CD8-positive, alpha-beta T cell (primary cell): ENCODE measurements at regions of chr9 and their contacts with region 1.

Region 1: DNA sequence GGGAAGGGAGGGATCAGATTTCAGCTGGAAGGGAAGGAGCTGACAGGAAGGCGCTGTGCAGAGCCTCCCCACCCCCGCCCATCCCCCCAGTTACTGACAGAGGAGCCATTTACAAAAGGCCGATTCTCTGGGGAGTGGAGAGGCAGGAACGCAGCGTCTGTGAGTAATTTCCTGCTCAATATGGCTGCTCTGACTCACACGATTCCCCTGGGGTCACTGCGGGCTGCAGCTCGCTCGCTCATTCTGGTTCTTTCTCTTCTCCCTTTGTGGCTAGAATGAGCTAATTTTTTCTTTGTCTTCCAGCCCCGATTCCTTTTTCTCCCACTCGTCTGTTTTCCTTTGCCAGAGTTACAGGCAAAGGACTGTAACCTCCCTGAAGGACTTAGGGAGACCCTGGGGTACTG is 28.8 kb downstream of the PTPA start:
- DNase-seq: peak; percentile 35 to 92 (median 80)
- ATAC-seq: peak; percentile 89
- H3K4me3 ChIP-seq: peak overlapping the region; percentile 55 to 58
- H3K4me3 Mint-ChIP-seq: peak overlapping the region; percentile 90
- H3K27ac ChIP-seq: peak overlapping the region; percentile 86 to 94
- H3K27ac Mint-ChIP-seq: peak overlapping the region; percentile 95
- H3K4me1 ChIP-seq: peaks cover 36% of the 10 kb centered on the region
- H3K4me1 Mint-ChIP-seq: peaks cover 34% of the 10 kb centered on the region
- H3K27me3 ChIP-seq: no peaks in the 10 kb centered on the region
- H3K27me3 Mint-ChIP-seq: no peaks in the 10 kb centered on the region
- CTCF ChIP-seq: no peak

Region 2: DNA sequence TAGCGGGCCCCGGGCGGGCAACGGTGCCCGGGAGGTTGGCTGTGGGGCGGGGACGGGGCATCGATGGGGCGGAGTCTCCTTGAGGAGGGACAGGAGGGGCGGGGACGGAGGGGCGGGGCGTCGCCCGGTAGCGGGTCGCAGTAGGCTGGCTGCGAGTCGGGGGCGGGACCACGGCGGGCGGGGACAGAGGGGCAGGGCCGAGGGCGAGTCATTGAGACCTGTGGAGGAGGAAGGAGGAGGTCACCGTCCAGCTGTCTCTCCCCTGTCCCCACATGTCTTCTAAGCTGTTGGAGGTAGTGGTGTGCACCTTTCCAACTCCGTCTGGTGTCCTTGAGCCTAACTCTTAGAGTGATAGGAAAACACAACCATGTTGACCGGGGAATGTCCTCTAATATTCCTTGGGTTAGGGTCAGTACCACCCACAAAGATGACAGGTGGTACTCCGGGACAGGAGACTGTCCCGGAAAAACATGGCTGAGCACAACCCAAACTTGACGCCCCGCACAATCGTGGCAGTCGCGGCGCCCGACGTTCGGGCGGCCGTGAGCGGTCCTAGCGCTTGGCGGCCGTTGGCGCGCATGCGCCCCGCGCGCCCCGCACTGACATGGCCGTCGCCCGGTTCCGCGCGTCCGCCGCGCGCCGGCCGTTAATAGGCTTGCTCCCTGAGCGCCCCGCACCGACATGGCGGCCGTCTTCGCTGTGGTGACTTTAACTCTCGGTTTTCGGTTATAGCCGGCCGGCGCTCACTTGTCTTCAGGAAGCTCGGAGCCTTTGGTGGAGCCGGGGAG is 29.1 kb before region 1 on chr9 and contains the starts of genes CRAT and PTPA:
- CTCF ChIA-PET with region 1: interaction called, 5 read pairs
- POLR2A ChIA-PET with region 1: no interaction called
- intact Hi-C with region 1: loop called in 1 of 2 experiments (anchors 2 kb)
- DNase-seq: peak; percentile 91 to 97 (median 96)
- ATAC-seq: peak; percentile 88
- H3K4me3 ChIP-seq: peak within 1 kb of the TSS; percentile 69 to 85
- H3K4me3 Mint-ChIP-seq: peak within 1 kb of the TSS; percentile 93
- H3K27ac ChIP-seq: peak within 1 kb of the TSS; percentile 79 to 81
- H3K27ac Mint-ChIP-seq: peak within 1 kb of the TSS; percentile 91
- H3K4me1 ChIP-seq: peaks cover 21% of the 10 kb centered on the region
- H3K4me1 Mint-ChIP-seq: peaks cover 39% of the 10 kb centered on the region
- H3K27me3 ChIP-seq: no peaks in the 10 kb centered on the region
- H3K27me3 Mint-ChIP-seq: no peaks in the 10 kb centered on the region
- CTCF ChIP-seq: no peak
- total RNA-seq, gene CRAT: 5.6 to 6.3 TPM
- total RNA-seq, gene PTPA: 24.7 to 26.8 TPM

Region 3: GRCh38 chr9:129202613-129203555 is 62.9 kb after region 1 on chr9:
- CTCF ChIA-PET with region 1: interaction called, 3 read pairs
- POLR2A ChIA-PET with region 1: no interaction called
- intact Hi-C with region 1: loop called in 1 of 2 experiments (anchors 2 kb)
- DNase-seq: peak; percentile 84 to 96 (median 90)
- ATAC-seq: peak; percentile 93
- H3K4me3 ChIP-seq: peak overlapping the region; percentile 56 to 95
- H3K4me3 Mint-ChIP-seq: peak overlapping the region; percentile 78
- H3K27ac ChIP-seq: peak overlapping the region; percentile 62 to 65
- H3K27ac Mint-ChIP-seq: peak overlapping the region; percentile 79
- H3K4me1 ChIP-seq: peaks cover 30% of the 10 kb centered on the region
- H3K4me1 Mint-ChIP-seq: peaks cover 28% of the 10 kb centered on the region
- H3K27me3 ChIP-seq: no peaks in the 10 kb centered on the region
- H3K27me3 Mint-ChIP-seq: no peaks in the 10 kb centered on the region
- CTCF ChIP-seq: no peak

Region 4: DNA sequence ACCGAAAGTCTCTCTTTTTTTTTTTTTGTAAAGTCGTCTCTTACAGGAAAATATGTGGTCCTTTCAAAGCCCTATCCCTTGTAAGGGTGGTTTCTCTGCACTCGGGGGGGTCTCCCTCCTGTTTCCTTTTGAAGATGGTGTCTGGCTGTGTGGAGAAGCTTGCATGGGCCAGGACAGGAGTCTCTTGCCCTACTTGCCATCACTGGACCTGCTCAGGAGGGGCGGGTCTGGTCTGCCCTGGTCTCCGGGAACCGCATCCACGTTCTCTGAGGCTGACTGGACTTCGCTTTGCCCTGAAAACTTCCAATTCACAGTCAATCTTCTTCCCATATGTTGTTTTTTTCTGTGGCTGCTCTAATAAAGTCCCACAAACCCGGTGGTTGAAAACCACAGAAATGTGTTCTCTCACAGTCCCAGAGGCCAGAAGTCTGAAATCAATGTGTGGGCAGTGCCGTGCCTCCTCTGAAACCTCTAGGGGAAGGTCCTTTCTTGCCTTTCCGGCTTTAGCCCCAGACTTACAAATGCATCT is 131.0 kb after region 1 on chr9:
- CTCF ChIA-PET with region 1: no interaction called
- POLR2A ChIA-PET with region 1: no interaction called
- intact Hi-C with region 1: loop called in 1 of 2 experiments (anchors 1 kb)
- DNase-seq: peak in 2 of 9 experiments; percentile 23 to 64
- ATAC-seq: peak; percentile 55
- H3K4me3 ChIP-seq: peak overlapping the region; percentile 10 to 16
- H3K4me3 Mint-ChIP-seq: peak overlapping the region; percentile 76
- H3K27ac ChIP-seq: peak overlapping the region in 1 of 2 experiments; percentile 43
- H3K27ac Mint-ChIP-seq: peak overlapping the region; percentile 70
- H3K4me1 ChIP-seq: peaks cover 22% of the 10 kb centered on the region
- H3K4me1 Mint-ChIP-seq: peaks cover 31% of the 10 kb centered on the region
- H3K27me3 ChIP-seq: no peaks in the 10 kb centered on the region
- H3K27me3 Mint-ChIP-seq: no peaks in the 10 kb centered on the region
- CTCF ChIP-seq: no peak

Region 5: DNA sequence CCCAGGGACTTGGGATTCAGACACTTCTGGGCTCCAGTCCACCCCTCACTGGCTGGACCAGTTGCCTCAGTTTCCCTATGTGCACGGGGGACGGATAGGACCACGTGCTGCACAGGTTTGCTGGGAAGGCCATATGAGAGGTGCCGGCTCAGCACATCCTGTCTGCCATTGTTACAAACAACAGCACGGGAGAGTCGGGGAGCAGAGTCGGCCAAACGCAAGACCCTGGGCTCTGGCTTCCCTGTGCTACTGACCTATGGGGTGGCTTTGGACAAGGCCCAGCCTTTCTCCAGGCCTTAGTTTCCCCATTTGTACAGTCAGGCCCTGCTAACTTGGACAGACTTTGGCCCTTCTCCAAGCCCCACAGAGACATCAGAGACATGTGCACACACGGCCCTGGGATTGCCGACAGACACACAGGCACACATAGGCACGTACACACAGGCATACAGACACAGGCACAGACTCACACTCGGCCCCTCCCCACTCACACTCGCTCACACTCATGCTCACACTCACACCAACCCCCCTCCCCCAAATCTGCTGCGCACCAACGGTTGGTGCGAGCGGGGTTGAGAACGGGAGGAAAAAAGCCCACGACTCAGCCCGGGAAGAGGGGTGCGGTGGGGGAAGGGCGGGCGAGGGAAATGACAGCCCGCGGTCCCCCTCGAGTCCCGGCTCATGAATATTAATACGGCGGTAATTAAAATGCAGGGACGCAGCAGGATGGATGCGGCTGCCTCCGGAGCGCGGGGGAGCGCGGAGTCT is 347.8 kb after region 1 on chr9:
- CTCF ChIA-PET with region 1: no interaction called
- POLR2A ChIA-PET with region 1: no interaction called
- intact Hi-C with region 1: loop called in 1 of 2 experiments (anchors 2 kb)
- DNase-seq: peak in 3 of 9 experiments; percentile 64 to 80 (median 64)
- ATAC-seq: peak; percentile 14
- H3K4me3 ChIP-seq: peak overlapping the region; percentile 55 to 58
- H3K4me3 Mint-ChIP-seq: peak overlapping the region; percentile 80
- H3K27ac ChIP-seq: peak overlapping the region; percentile 72 to 83
- H3K27ac Mint-ChIP-seq: peak overlapping the region; percentile 92
- H3K4me1 ChIP-seq: peaks cover 56% of the 10 kb centered on the region
- H3K4me1 Mint-ChIP-seq: peaks cover 42% of the 10 kb centered on the region
- H3K27me3 ChIP-seq: no peaks in the 10 kb centered on the region
- H3K27me3 Mint-ChIP-seq: no peaks in the 10 kb centered on the region
- CTCF ChIP-seq: no peak

Region 6: DNA sequence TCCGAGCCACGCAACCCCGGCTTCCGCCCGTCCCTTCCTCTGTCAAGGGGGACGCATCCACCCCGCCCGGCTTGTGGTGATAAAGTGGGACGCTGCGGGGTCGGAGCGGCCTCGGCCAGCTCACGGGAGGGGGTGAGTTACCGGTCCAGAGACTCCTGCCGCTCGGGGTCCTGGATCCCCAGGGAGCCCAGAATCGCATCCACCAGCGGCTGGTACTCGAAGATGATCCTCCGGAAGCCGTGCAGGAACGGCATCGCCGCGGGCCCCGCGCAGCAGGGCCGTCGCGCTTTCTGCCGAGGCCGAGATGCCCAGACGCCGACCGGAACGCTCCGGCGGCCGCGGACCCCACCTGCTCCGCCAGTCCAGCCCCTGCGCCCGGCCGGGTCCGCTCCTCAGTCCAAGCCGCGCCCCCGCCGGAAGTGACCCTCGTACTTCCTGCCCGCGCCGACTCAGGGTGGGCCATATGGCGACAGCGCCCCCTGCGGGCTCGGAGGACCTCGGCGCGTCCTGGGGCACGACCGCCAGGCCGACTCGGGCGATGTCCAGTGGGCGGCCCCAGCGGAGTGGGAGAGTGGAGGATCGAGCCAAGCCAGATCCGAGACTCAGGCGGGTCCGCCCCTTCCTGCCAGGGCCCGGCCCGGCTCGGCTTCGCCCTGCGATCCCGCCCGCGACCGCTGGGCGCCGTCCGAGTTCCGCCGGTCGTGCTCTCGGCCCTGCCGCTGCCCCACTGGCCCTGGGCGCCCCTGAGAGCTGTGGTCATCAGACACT is 501.9 kb after region 1 on chr9 and contains the start of gene ASB6:
- CTCF ChIA-PET with region 1: interaction called, 5 read pairs
- POLR2A ChIA-PET with region 1: no interaction called
- intact Hi-C with region 1: loop called in 1 of 2 experiments (anchors 1 kb)
- DNase-seq: peak; percentile 78 to 97 (median 93)
- ATAC-seq: peak; percentile 76
- H3K4me3 ChIP-seq: peak within 1 kb of the TSS; percentile 98 to 99
- H3K4me3 Mint-ChIP-seq: peak within 1 kb of the TSS; percentile 85
- H3K27ac ChIP-seq: peak within 1 kb of the TSS; percentile 68 to 80
- H3K27ac Mint-ChIP-seq: peak within 1 kb of the TSS; percentile 89
- H3K4me1 ChIP-seq: peaks cover 23% of the 10 kb centered on the region
- H3K4me1 Mint-ChIP-seq: peaks cover 24% of the 10 kb centered on the region
- H3K27me3 ChIP-seq: no peaks in the 10 kb centered on the region
- H3K27me3 Mint-ChIP-seq: no peaks in the 10 kb centered on the region
- CTCF ChIP-seq: peak; percentile 100
- total RNA-seq, gene ASB6: 39.9 to 42.0 TPM

Region 7: GRCh38 chr9:129783516-129784361 is 643.7 kb after region 1 on chr9:
- CTCF ChIA-PET with region 1: interaction called, 6 read pairs
- POLR2A ChIA-PET with region 1: no interaction called
- intact Hi-C with region 1: loop called (anchors 2 kb)
- DNase-seq: peak; percentile 55 to 81 (median 73)
- ATAC-seq: peak; percentile 100
- H3K4me3 ChIP-seq: no peak overlapping the region
- H3K4me3 Mint-ChIP-seq: no peak overlapping the region
- H3K27ac ChIP-seq: no peak overlapping the region
- H3K27ac Mint-ChIP-seq: no peak overlapping the region
- H3K4me1 ChIP-seq: no peaks in the 10 kb centered on the region
- H3K4me1 Mint-ChIP-seq: peaks cover 4% of the 10 kb centered on the region
- H3K27me3 ChIP-seq: peaks cover 0 to 3% of the 10 kb centered on the region in 2 experiments
- H3K27me3 Mint-ChIP-seq: peaks cover 5% of the 10 kb centered on the region
- CTCF ChIP-seq: peak; percentile 84